ENCODE measurements at regions of chr10 and their contacts with region 1.

Region 1: DNA sequence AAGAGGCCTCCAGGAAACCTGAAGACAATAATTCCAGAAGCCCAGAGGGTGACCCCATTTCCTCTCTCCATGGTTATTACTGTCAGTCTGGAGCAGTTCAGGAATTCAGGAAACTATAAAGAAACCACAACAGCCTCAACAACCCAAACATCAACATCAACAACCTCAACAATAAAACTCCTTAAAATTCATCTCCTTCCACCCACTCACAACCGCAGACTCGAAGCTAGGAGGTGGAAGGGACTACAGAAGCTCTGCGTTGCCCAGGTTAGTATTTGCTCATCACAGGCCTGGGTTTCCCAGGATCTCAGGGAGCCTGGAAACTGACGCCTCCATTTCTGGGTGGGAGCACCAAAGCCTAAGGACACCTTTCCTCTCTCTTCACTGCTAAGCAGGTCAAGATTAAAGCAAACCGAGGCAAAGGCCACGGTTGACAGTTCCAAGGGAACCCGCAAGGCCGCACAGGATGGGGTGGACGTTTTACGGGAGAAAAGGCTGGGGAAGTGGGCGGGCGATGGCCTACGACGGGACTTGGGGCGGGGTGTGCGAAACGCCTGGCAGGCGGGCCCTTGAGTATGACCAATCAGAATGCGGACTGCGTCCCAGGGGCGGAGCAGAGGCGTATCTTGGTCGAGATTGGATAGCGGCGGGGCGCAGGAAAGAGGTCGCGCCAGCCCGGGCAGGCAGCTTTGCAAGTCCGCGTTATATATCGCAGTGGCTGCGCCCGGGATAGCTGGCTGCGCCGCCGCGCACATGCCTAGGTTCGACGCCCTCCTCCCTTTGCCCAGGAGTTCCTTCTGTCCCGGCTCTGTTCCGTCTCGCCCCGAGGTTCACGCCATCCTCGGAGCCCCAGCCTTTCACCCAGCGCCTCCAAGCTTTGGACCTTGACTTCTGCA is at the start of gene ELOVL3:
- DNase-seq: no peak
- H3K4me3 ChIP-seq: peak within 1 kb of the TSS; percentile 24 to 27
- H3K27ac ChIP-seq: peak within 1 kb of the TSS; percentile 73
- H3K4me1 ChIP-seq: peaks cover 28% of the 10 kb centered on the region
- H3K27me3 ChIP-seq: peaks cover under 1% of the 10 kb centered on the region
- CTCF ChIP-seq: no peak
- POLR2A ChIP-seq: peak in 1 of 2 donors; percentile 22
- total RNA-seq, gene ELOVL3: not detected

Region 2: GRCh38 chr10:102167861-102168260 is 58.0 kb before region 1 on chr10:
- intact Hi-C with region 1: loop called (anchors 10 kb)
- DNase-seq: no peak
- H3K4me3 ChIP-seq: no peak overlapping the region
- H3K27ac ChIP-seq: no peak overlapping the region
- H3K4me1 ChIP-seq: peaks cover 13% of the 10 kb centered on the region
- H3K27me3 ChIP-seq: no peaks in the 10 kb centered on the region
- CTCF ChIP-seq: no peak
- POLR2A ChIP-seq: no peak

Region 3: GRCh38 chr10:102185811-102186527 is 39.9 kb before region 1 on chr10:
- intact Hi-C with region 1: no loop called
- DNase-seq: no peak
- H3K4me3 ChIP-seq: no peak overlapping the region
- H3K27ac ChIP-seq: no peak overlapping the region
- H3K4me1 ChIP-seq: peaks cover 5% of the 10 kb centered on the region
- H3K27me3 ChIP-seq: no peaks in the 10 kb centered on the region
- CTCF ChIP-seq: no peak
- POLR2A ChIP-seq: no peak

Region 4: GRCh38 chr10:102352066-102352715 is 126.3 kb after region 1 on chr10:
- intact Hi-C with region 1: loop called (anchors 5 kb)
- DNase-seq: no peak
- H3K4me3 ChIP-seq: no peak overlapping the region
- H3K27ac ChIP-seq: no peak overlapping the region
- H3K4me1 ChIP-seq: no peaks in the 10 kb centered on the region
- H3K27me3 ChIP-seq: no peaks in the 10 kb centered on the region
- CTCF ChIP-seq: peak; percentile 73 to 91 (median 74)
- POLR2A ChIP-seq: no peak

Region 5: GRCh38 chr10:102660888-102661657 is 435.2 kb after region 1 on chr10:
- intact Hi-C with region 1: no loop called
- DNase-seq: no peak
- H3K4me3 ChIP-seq: peak overlapping the region; percentile 18 to 23
- H3K27ac ChIP-seq: peak overlapping the region; percentile 69
- H3K4me1 ChIP-seq: peaks cover 41% of the 10 kb centered on the region
- H3K27me3 ChIP-seq: no peaks in the 10 kb centered on the region
- CTCF ChIP-seq: no peak
- POLR2A ChIP-seq: no peak

Region 6: GRCh38 chr10:103192451-103193106 is 966.7 kb after region 1 on chr10:
- intact Hi-C with region 1: no loop called
- DNase-seq: peak in 1 of 2 donors; percentile 89
- H3K4me3 ChIP-seq: peak overlapping the region; percentile 91 to 95
- H3K27ac ChIP-seq: peak overlapping the region; percentile 98
- H3K4me1 ChIP-seq: peaks cover 52% of the 10 kb centered on the region
- H3K27me3 ChIP-seq: no peaks in the 10 kb centered on the region
- CTCF ChIP-seq: peak in 1 of 3 experiments; percentile 5
- POLR2A ChIP-seq: no peak

Measured in vagina (tissue), 2 donors.